Activated naive CD4-positive, alpha-beta T cell treated with anti-CD3 and anti-CD28 coated beads for 36 hours (primary cell): ENCODE measurements at regions of chr4 and their contacts with region 1.

Region 1: GRCh38 chr4:119286377-119287002 is 35.4 kb downstream of the FABP2 start:
- DNase-seq: peak; percentile 52
- H3K4me3 Mint-ChIP-seq: no peak overlapping the region
- H3K27ac Mint-ChIP-seq: no peak overlapping the region
- H3K4me1 Mint-ChIP-seq: peaks cover 11% of the 10 kb centered on the region
- H3K27me3 Mint-ChIP-seq: no peaks in the 10 kb centered on the region

Region 2: DNA sequence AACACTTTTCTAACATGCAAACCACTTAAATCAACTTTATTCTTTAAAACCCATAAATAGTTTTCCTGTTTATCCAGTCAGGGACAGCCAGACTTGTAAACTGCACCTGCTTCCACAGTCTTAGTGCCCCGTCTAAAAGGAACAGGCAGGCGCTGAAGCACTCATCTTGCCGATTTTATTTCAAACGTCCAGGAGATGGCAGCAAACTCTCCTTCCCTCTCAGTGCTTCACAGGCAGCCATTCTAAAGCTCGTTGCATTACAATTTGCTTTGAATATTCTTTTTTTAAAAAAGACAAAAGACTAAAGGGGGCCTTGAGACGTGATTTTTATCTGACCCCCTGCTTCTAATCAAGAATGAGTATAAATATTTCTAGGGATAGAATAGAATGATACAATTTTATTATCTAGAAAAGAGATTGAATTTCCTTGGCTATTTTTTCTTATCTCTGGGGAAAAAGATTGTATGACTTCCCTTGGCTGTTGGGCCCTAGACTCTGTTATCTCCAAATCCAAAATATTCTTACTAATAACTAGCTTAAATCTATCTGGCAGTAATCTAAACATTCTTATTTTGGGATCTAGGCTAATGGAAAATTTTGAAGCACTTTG is 244.4 kb before region 1 on chr4:
- CTCF ChIA-PET with region 1: interaction called, 56 read pairs
- intact Hi-C with region 1: loop called (anchors 1 kb)
- DNase-seq: peak; percentile 75
- H3K4me3 Mint-ChIP-seq: no peak overlapping the region
- H3K27ac Mint-ChIP-seq: no peak overlapping the region
- H3K4me1 Mint-ChIP-seq: peaks cover 13% of the 10 kb centered on the region
- H3K27me3 Mint-ChIP-seq: no peaks in the 10 kb centered on the region

Region 3: DNA sequence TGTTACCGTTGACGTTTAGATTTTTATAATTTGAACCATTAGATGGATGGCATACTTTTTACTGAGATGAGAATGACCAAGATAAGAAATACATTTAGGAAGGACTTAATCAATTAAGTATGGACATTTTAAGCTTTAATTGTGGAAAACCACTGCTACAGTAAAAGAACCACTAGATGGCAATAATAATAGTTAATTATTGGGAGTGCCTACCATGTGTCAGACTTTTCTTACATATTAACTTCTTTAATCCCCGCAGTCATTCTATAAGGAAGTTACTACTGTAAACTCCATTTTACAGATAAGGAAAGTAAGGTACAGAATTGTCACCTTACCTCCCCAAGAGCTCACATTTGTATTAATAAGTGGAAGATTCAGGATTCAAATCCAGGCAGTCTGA is 199.4 kb before region 1 on chr4:
- CTCF ChIA-PET with region 1: interaction called, 3 read pairs
- intact Hi-C with region 1: loop called (anchors 2 kb)
- DNase-seq: no peak
- H3K4me3 Mint-ChIP-seq: no peak overlapping the region
- H3K27ac Mint-ChIP-seq: no peak overlapping the region
- H3K4me1 Mint-ChIP-seq: no peaks in the 10 kb centered on the region
- H3K27me3 Mint-ChIP-seq: no peaks in the 10 kb centered on the region

Region 4: DNA sequence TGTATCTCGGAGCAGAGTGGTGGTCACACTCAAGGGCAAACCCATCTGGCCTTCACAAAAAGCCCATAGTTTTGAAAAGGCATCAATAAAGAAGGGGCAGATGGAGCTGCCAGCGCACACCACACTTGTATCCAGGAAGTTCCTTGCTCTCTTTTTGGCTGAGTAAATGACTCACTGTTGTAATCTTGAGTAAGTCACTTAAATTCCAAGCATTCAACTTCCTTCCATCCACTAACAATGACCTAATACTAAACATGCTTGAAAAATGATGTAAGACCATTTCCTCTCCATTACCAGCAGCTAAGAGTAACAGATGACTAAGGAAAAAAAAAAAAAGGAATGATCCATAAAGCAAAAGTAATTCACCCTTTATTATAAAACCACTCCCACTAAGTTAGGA is 183.2 kb before region 1 on chr4:
- CTCF ChIA-PET with region 1: interaction called, 3 read pairs
- intact Hi-C with region 1: loop called (anchors 5 kb)
- DNase-seq: no peak
- H3K4me3 Mint-ChIP-seq: no peak overlapping the region
- H3K27ac Mint-ChIP-seq: no peak overlapping the region
- H3K4me1 Mint-ChIP-seq: no peaks in the 10 kb centered on the region
- H3K27me3 Mint-ChIP-seq: peaks cover 3% of the 10 kb centered on the region